GM13976 (cell line): ENCODE measurements at regions of chr2 and their contacts with region 1.

Region 1: GRCh38 chr2:179218848-179219594 is 45.6 kb downstream of the SESTD1 start:
- DNase-seq: peak; percentile 62
- CTCF ChIP-seq: peak; percentile 94

Region 2: GRCh38 chr2:179440642-179441251 is 221.7 kb after region 1 on chr2:
- in situ Hi-C with region 1: loop called (anchors 25 kb)
- DNase-seq: peak; percentile 38
- CTCF ChIP-seq: peak; percentile 49